K562 (cell line): ENCODE measurements at regions of chr1 and their contacts with region 1.

Region 1: DNA sequence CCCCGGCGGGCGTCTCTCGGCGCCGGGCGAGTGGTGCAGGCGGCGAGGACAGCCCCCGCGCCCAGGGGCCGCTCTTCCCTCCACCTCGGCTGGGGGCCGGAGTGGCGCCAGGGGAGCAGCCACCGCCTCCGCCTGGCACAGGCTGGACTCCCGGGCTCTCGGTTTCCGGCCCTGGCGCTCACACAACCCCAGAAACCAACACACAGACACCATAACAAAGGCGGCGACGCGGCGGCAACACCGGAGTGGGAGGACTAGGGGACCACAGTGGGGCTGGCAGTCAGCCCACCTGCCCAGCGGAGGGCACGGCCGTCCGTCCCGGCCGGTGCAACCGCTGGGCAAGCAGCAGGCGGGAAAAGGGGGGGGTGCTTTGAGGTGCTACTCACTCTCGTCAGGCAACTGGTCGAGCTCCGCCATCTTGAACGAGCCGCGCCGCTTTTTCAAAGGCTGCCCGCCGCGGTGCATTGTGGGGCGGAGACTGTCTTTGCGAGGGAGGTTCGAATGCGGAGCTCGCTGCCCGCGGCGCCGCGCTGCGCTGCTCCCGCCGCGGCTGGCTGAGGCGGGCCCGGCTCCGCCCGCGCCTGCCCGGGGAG is at the start of gene LIN9:
- DNase-seq: peak; percentile 92 to 98 (median 95)
- ATAC-seq: peak; percentile 85
- H3K4me3 ChIP-seq: peak within 1 kb of the TSS; percentile 100
- H3K27ac ChIP-seq: peak within 1 kb of the TSS; percentile 99
- H3K4me1 ChIP-seq: peaks cover 22 to 28% of the 10 kb centered on the region in 2 experiments
- H3K27me3 ChIP-seq: no peaks in the 10 kb centered on the region; a peak in 1 of 5 replicates
- CTCF ChIP-seq: no peak; a peak in 1 of 6 replicates
- EP300 ChIP-seq: peak; percentile 20; the same call in 1 of the 2 replicates
- POLR2A ChIP-seq: peak; percentile 97
- RAD21 ChIP-seq: 0 out of 4 replicates have a peak, but pooled peaks of 1 of the 2 experiments have one; percentile 9
- polyA plus RNA-seq, gene LIN9: 19.4 to 26.8 TPM

Region 2: GRCh38 chr1:224980181-224980580 is 1328.6 kb before region 1 on chr1:
- CTCF ChIA-PET with region 1: no interaction called
- POLR2A ChIA-PET with region 1: no interaction called
- in situ Hi-C with region 1: no loop called
- intact Hi-C with region 1: no loop called
- DNase-seq: no peak
- ATAC-seq: no peak
- H3K4me3 ChIP-seq: no peak overlapping the region
- H3K27ac ChIP-seq: no peak overlapping the region
- H3K4me1 ChIP-seq: no peaks in the 10 kb centered on the region
- H3K27me3 ChIP-seq: no peaks in the 10 kb centered on the region
- CTCF ChIP-seq: no peak
- EP300 ChIP-seq: no peak
- POLR2A ChIP-seq: no peak
- RAD21 ChIP-seq: no peak

Region 3: DNA sequence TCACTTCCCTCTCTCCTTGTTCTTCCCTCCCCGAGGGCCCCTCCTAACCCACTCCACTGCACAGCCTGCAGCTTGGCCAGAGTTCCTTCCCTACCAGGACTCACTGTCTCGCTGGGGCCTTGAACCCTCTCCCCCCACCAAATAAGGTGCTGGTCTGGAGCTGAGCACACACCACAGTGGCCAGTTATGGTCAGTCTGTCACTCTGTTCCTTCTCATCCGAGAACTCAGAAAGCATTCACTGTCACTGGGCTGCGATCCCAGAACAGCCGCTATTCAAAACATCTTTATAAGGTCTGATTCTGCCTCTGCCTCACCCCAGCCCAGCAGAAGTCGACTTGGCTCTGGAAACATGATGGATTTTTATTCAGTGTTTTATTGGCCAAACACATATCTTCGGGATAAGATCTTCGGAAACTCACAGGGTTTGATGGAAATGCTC is 861.1 kb before region 1 on chr1:
- CTCF ChIA-PET with region 1: no interaction called
- POLR2A ChIA-PET with region 1: no interaction called
- in situ Hi-C with region 1: no loop called
- intact Hi-C with region 1: loop called (anchors 5 kb)
- DNase-seq: no peak
- ATAC-seq: no peak
- H3K4me3 ChIP-seq: no peak overlapping the region
- H3K27ac ChIP-seq: no peak overlapping the region
- H3K4me1 ChIP-seq: peaks cover 26 to 28% of the 10 kb centered on the region in 2 experiments
- H3K27me3 ChIP-seq: no peaks in the 10 kb centered on the region
- CTCF ChIP-seq: no peak
- EP300 ChIP-seq: no peak
- POLR2A ChIP-seq: no peak
- RAD21 ChIP-seq: no peak

Region 4: DNA sequence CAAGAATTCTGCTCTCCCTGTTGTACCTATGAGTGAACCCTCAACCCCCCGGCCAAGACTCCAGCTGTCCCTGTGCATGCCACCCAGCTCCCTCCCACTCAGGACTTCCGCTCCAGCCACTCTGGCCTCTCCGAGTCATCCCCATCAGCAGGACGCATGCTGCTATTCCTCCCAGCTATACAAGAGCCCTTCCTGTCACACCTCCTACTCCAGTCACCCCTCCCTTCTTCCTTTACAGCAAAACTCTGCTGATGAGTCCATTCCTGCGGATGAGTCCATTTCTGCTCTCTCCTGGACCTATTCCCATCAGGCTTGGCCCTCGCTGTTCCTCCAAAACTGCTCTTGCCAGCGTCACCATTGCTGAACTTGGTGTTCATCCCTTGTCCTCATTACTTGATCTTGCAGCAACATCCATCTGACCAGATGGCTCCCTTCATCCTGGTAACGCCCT is 204.1 kb before region 1 on chr1:
- CTCF ChIA-PET with region 1: no interaction called
- POLR2A ChIA-PET with region 1: no interaction called
- in situ Hi-C with region 1: no loop called
- intact Hi-C with region 1: no loop called
- DNase-seq: no peak
- ATAC-seq: peak; percentile 37
- H3K4me3 ChIP-seq: no peak overlapping the region
- H3K27ac ChIP-seq: no peak overlapping the region
- H3K4me1 ChIP-seq: peaks cover 15 to 34% of the 10 kb centered on the region in 2 experiments
- H3K27me3 ChIP-seq: no peaks in the 10 kb centered on the region
- CTCF ChIP-seq: no peak
- EP300 ChIP-seq: no peak
- POLR2A ChIP-seq: no peak
- RAD21 ChIP-seq: no peak

Region 5: DNA sequence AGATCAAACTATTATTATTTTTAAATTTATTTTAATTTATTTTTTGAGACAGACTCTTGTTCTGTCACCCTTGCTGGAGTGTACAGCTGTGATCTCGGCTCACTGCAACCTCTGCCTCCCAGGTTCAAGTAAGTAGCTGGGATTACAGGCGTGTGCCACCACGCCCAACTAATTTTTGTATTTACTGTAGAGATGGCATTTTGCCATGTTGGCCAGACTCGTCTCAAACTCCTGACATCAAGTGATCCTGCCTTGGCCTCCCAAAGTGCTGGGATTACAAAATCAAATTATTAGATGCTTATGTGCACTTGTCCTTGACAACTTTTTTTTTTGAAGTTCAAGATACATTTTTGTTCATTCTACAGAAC is 15.3 kb before region 1 on chr1:
- CTCF ChIA-PET with region 1: no interaction called
- POLR2A ChIA-PET with region 1: interaction called, 22 read pairs
- in situ Hi-C with region 1: no loop called
- intact Hi-C with region 1: no loop called
- DNase-seq: no peak
- ATAC-seq: no peak; the same call in 2 of the 3 replicates
- H3K4me3 ChIP-seq: no peak overlapping the region
- H3K27ac ChIP-seq: no peak overlapping the region
- H3K4me1 ChIP-seq: no peaks in the 10 kb centered on the region
- H3K27me3 ChIP-seq: no peaks in the 10 kb centered on the region
- CTCF ChIP-seq: no peak
- EP300 ChIP-seq: no peak
- POLR2A ChIP-seq: no peak
- RAD21 ChIP-seq: no peak

Region 6: DNA sequence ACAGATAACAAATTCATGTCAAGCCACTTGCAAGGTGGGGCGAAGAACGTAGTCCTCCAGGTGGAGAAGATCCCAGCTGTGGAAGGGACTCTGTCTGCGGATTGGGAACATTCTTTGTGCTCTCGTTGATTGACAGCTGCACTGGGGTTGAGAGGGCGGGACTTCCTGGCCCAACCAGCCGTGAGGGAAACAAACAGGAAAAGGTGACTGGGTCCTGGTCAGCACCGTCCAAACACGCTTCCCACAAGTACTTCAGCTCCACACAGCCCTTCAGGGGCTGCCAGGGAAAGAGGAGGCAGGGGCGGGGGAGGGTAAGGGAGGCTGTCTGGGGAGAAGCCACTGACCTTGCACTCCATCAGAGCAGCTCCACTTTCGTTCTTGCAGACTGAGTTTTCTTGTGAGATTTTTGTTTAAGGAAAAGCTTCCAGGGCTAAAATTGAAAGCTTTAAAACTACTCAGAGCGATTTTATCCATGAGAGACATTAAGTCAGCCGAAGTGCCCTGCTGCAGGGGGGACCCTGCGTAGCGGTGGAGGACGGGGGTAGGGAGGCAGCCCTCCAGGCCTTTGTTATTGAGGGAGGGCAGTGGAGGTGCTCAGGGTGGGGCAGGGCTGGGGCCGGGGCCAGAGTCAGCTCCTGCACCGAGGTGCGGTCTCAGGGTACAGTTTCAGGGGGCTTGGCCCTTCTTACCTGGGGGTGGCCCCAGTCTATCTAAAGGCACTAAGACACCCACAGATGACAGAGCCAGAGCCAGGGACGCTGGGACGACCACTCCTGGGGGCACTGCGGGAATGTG is 218.2 kb after region 1 on chr1:
- CTCF ChIA-PET with region 1: no interaction called
- POLR2A ChIA-PET with region 1: no interaction called
- in situ Hi-C with region 1: no loop called
- intact Hi-C with region 1: no loop called
- DNase-seq: peak; percentile 65 to 82 (median 78)
- ATAC-seq: peak; percentile 93
- H3K4me3 ChIP-seq: no peak overlapping the region
- H3K27ac ChIP-seq: no peak overlapping the region
- H3K4me1 ChIP-seq: peaks cover 0 to 5% of the 10 kb centered on the region in 2 experiments; a peak in 2 of 5 replicates
- H3K27me3 ChIP-seq: peaks cover 12 to 58% of the 10 kb centered on the region in 2 experiments; a peak in 4 of 5 replicates
- CTCF ChIP-seq: no peak
- EP300 ChIP-seq: no peak
- POLR2A ChIP-seq: no peak
- RAD21 ChIP-seq: no peak

Region 7: GRCh38 chr1:226882631-226883409 is 574.0 kb after region 1 on chr1:
- CTCF ChIA-PET with region 1: no interaction called
- POLR2A ChIA-PET with region 1: no interaction called
- in situ Hi-C with region 1: no loop called
- intact Hi-C with region 1: no loop called
- DNase-seq: no peak
- ATAC-seq: no peak
- H3K4me3 ChIP-seq: no peak overlapping the region
- H3K27ac ChIP-seq: no peak overlapping the region
- H3K4me1 ChIP-seq: no peaks in the 10 kb centered on the region
- H3K27me3 ChIP-seq: no peaks in the 10 kb centered on the region
- CTCF ChIP-seq: no peak
- EP300 ChIP-seq: no peak
- POLR2A ChIP-seq: no peak
- RAD21 ChIP-seq: no peak